ENCODE measurements at regions of chr17 and their contacts with region 1.

Region 1: GRCh38 chr17:50618941-50619888 is 15.5 kb upstream of the ABCC3 start:
- DNase-seq: no peak
- ATAC-seq: peak; percentile 41

Region 2: DNA sequence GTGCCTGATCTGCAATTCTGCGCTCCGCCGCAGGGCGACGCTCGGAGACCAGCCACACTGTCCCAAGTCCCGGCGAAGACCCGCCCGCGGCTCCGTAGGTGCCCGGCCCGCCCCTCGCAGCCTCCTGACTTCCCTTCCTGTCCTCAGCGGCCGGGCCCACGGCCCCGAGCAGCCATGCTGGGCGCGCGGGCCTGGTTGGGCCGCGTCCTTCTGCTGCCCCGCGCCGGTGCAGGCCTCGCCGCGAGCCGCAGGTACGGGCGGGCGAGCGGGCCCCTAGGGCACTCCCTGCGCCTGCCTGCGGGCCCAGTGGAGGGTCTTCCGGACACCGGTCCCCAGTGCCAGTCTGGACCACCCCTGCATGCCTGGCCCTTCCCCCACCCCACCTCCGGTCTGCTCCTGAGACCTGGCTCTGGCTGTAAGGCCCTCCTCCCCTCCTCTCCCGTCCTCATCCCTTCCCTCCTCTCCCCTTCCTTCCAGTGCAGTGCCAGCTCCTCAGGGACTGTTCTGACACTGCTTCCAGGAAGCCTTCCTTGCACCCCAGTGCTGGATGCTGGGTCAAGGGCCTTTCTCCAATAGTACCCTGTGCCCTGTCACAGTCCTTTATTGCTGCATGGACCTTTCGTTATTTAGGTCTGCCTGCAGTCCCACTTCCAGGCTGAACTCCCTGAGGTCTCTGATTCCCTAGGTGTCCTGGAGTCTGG is 72.0 kb before region 1 on chr17 and contains the start of gene SPATA20:
- intact Hi-C with region 1: no loop called
- DNase-seq: peak; percentile 93 to 95
- ATAC-seq: peak; percentile 59
- total RNA-seq, gene SPATA20: 61.1 to 66.7 TPM

Region 3: GRCh38 chr17:50564916-50565315 is 54.3 kb before region 1 on chr17:
- intact Hi-C with region 1: loop called in 1 of 2 experiments (anchors 5 kb)
- DNase-seq: peak in 1 of 2 donors; percentile 54
- ATAC-seq: no peak

Measured in left colon (tissue), 2 donors.